ENCODE measurements at regions of chr7 and their contacts with region 1.

Region 1: GRCh38 chr7:29564496-29565223 is 1.0 kb downstream of the PRR15 start:
- DNase-seq: peak; percentile 92
- ATAC-seq: peak; percentile 57
- H3K4me3 ChIP-seq: peak overlapping the region; percentile 83
- H3K27ac ChIP-seq: peak overlapping the region; percentile 82
- H3K4me1 ChIP-seq: peaks cover 23% of the 10 kb centered on the region
- H3K27me3 ChIP-seq: no peaks in the 10 kb centered on the region
- CTCF ChIP-seq: no peak

Region 2: GRCh38 chr7:29113384-29114103 is 451.1 kb before region 1 on chr7:
- CTCF ChIA-PET with region 1: no interaction called
- POLR2A ChIA-PET with region 1: no interaction called
- intact Hi-C with region 1: loop called (anchors 10 kb)
- DNase-seq: peak; percentile 89
- ATAC-seq: peak; percentile 90
- H3K4me3 ChIP-seq: peak overlapping the region; percentile 1; the same call in 1 of the 2 replicates
- H3K27ac ChIP-seq: peak overlapping the region; percentile 76
- H3K4me1 ChIP-seq: peaks cover 51% of the 10 kb centered on the region
- H3K27me3 ChIP-seq: no peaks in the 10 kb centered on the region
- CTCF ChIP-seq: peak; percentile 74

Region 3: DNA sequence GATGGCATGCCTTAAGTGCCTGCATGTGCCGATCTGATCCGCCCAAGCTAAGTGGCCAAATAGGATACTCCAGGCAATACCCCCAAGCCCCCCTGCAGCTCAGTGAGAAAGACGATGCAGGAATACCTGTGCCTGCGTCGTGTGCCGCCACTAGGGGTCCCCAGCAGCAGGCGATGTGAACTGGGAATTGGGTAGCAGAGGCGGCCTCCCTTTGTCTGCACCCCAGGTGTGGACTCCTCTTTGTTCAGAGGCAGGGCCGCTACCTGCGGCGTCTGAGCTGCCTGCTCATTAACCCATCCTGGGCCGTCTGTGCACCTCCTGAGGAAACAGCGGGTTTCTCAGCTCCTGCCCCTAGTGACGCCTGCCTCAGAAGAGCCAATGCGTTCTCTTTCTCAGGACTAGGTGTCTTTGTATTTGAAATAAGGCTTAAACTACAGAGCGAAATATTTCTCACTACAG is 374.9 kb before region 1 on chr7:
- CTCF ChIA-PET with region 1: interaction called, 5 read pairs
- POLR2A ChIA-PET with region 1: no interaction called
- intact Hi-C with region 1: loop called (anchors 2 kb)
- DNase-seq: peak; percentile 62
- ATAC-seq: peak; percentile 64
- H3K4me3 ChIP-seq: peak overlapping the region; percentile 42; the same call in 1 of the 2 replicates
- H3K27ac ChIP-seq: no peak overlapping the region; the same call in 1 of the 2 replicates
- H3K4me1 ChIP-seq: peaks cover 18% of the 10 kb centered on the region
- H3K27me3 ChIP-seq: no peaks in the 10 kb centered on the region
- CTCF ChIP-seq: peak; percentile 90

Region 4: GRCh38 chr7:29408841-29409243 is 155.8 kb before region 1 on chr7:
- CTCF ChIA-PET with region 1: no interaction called
- POLR2A ChIA-PET with region 1: no interaction called
- intact Hi-C with region 1: loop called (anchors 5 kb)
- DNase-seq: peak; percentile 94
- ATAC-seq: peak; percentile 95
- H3K4me3 ChIP-seq: no peak overlapping the region
- H3K27ac ChIP-seq: no peak overlapping the region
- H3K4me1 ChIP-seq: peaks cover 3% of the 10 kb centered on the region; the same call in 1 of the 2 replicates
- H3K27me3 ChIP-seq: no peaks in the 10 kb centered on the region
- CTCF ChIP-seq: peak; percentile 88

Region 5: GRCh38 chr7:29490094-29490607 is 74.5 kb before region 1 on chr7:
- CTCF ChIA-PET with region 1: no interaction called
- POLR2A ChIA-PET with region 1: no interaction called
- intact Hi-C with region 1: no loop called
- DNase-seq: no peak
- ATAC-seq: no peak
- H3K4me3 ChIP-seq: no peak overlapping the region
- H3K27ac ChIP-seq: no peak overlapping the region
- H3K4me1 ChIP-seq: peaks cover 13% of the 10 kb centered on the region
- H3K27me3 ChIP-seq: no peaks in the 10 kb centered on the region
- CTCF ChIP-seq: no peak

Region 6: GRCh38 chr7:29508608-29509007 is 56.1 kb before region 1 on chr7:
- CTCF ChIA-PET with region 1: no interaction called
- POLR2A ChIA-PET with region 1: no interaction called
- intact Hi-C with region 1: no loop called
- DNase-seq: no peak
- ATAC-seq: no peak
- H3K4me3 ChIP-seq: no peak overlapping the region
- H3K27ac ChIP-seq: no peak overlapping the region
- H3K4me1 ChIP-seq: no peaks in the 10 kb centered on the region
- H3K27me3 ChIP-seq: no peaks in the 10 kb centered on the region
- CTCF ChIP-seq: no peak

Region 7: GRCh38 chr7:29547465-29547864 is 17.2 kb before region 1 on chr7:
- CTCF ChIA-PET with region 1: no interaction called
- POLR2A ChIA-PET with region 1: interaction called, 12 read pairs
- intact Hi-C with region 1: no loop called
- DNase-seq: no peak
- ATAC-seq: no peak
- H3K4me3 ChIP-seq: no peak overlapping the region
- H3K27ac ChIP-seq: no peak overlapping the region
- H3K4me1 ChIP-seq: peaks cover 11% of the 10 kb centered on the region
- H3K27me3 ChIP-seq: no peaks in the 10 kb centered on the region
- CTCF ChIP-seq: no peak

Region 8: GRCh38 chr7:29622335-29623265 is 57.9 kb after region 1 on chr7:
- CTCF ChIA-PET with region 1: interaction called, 8 read pairs
- POLR2A ChIA-PET with region 1: interaction called, 8 read pairs
- intact Hi-C with region 1: loop called (anchors 1 kb)
- DNase-seq: peak; percentile 94
- ATAC-seq: peak; percentile 88
- H3K4me3 ChIP-seq: peak overlapping the region; percentile 45
- H3K27ac ChIP-seq: peak overlapping the region; percentile 80
- H3K4me1 ChIP-seq: peaks cover 43% of the 10 kb centered on the region
- H3K27me3 ChIP-seq: no peaks in the 10 kb centered on the region
- CTCF ChIP-seq: peak; percentile 23; the same call in 1 of the 2 replicates

Region 9: DNA sequence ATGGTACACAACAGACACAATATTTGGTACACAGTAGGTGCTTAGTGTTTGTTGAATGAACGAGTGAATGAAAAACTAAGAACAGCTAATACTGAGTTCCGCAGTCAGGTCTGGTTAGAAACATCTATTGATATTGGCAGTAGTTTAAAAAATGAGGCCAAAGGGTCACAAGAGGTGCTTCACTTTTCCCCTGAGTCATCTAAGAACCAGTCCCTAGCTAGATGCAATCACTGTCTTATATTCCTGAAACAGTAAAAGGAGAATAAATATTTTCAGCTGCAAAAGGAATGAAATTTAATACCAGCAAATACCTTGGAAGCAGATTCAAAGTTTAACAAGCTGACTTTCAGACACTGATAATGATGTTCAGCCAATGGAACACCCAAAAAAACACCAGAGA is 370.5 kb after region 1 on chr7:
- CTCF ChIA-PET with region 1: no interaction called
- POLR2A ChIA-PET with region 1: no interaction called
- intact Hi-C with region 1: loop called (anchors 10 kb)
- DNase-seq: peak; percentile 83
- ATAC-seq: peak; percentile 71
- H3K4me3 ChIP-seq: no peak overlapping the region
- H3K27ac ChIP-seq: peak overlapping the region; percentile 49
- H3K4me1 ChIP-seq: peaks cover 43% of the 10 kb centered on the region
- H3K27me3 ChIP-seq: no peaks in the 10 kb centered on the region
- CTCF ChIP-seq: no peak